KBM-7 (cell line): ENCODE measurements at regions of chr15 and their contacts with region 1.

Region 1: GRCh38 chr15:22795206-22796063 is 9.0 kb downstream of the NIPA1 start:
- DNase-seq: no peak

Region 2: DNA sequence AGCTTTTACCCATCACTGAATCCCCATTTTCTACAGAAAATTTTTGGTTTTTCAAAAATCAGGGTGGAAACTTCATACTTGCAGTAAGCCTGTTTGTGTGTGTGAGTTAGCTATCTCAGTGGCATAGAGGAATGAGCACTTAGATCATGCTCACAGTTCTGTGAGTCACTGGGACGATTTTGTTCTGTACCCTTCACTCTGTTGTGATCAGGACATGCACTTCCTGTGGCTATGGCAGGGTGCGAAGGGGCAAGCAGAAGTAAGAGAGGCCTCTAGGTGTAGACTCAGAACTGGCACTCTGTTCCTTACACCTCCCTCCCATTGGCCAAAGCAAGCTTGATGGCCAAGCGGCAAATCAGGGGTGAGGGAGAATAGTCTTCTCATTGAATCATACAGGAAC is 54.6 kb after region 1 on chr15:
- in situ Hi-C with region 1: loop called (anchors 10 kb)
- DNase-seq: no peak